Endothelial cell of umbilical vein (primary cell): ENCODE measurements at regions of chr5 and their contacts with region 1.

Region 1: DNA sequence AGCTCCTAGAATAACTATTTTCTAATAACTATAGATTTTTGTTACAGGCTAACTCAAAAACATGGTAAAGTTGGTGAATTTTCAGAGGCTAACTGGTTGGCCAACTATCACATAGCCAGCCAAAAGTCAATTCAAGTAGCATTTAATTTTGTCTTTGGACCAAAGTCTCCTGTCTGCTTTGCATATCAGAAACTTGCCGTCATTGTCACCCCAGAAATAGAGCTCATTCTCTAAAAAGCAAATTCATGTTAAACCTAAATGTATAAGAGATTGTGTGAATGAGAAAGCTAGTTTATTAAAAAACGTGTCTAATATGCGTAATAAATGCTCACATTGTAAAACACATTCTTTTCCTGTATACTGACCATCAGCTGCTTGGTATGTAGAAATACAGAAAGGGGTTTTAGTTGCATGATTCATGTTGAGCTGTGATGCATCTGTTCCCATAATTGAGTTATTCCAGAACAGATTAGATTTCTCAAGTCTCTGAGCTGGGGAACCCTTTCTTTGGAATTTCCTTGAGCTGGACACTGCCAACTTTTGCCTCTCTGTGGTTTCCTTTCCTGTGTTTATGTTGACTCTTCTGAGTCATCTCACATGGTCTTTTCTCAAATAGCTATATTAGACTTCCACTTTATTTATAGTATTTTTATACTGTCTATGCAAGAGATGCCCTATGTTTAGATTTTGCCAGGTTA is 7.3 kb downstream of the SRFBP1 start:
- DNase-seq: peak; percentile 97
- H3K4me3 ChIP-seq: peak overlapping the region in 1 of 3 experiments; percentile 59
- H3K27ac ChIP-seq: peak overlapping the region; percentile 96
- H3K4me1 ChIP-seq: peaks cover 32% of the 10 kb centered on the region
- H3K27me3 ChIP-seq: no peaks in the 10 kb centered on the region
- CTCF ChIP-seq: no peak
- POLR2A ChIP-seq: peak; percentile 55

Region 2: DNA sequence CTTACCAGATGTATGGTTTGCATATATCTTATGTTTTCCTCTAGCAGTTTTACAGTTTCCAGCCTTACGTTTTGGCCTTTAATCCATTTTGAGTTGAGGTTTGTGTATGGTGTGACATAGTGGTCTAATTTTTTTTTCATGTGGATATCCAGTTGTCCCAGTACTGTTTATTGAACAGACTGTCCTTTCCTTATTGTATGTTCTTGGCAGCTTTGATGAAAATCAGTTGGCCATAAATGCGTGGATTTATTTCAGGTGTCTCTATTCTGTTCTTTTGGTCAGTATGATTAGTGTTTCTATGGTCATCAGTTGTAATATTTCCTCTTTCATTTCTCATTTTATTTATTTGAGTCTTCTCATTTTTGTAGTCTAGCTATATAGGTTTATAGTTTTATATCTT is 35.1 kb after region 1 on chr5:
- CTCF ChIA-PET with region 1: no interaction called
- POLR2A ChIA-PET with region 1: no interaction called
- dilution Hi-C with region 1: no loop called
- intact Hi-C with region 1: no loop called
- DNase-seq: no peak
- H3K4me3 ChIP-seq: no peak overlapping the region
- H3K27ac ChIP-seq: no peak overlapping the region
- H3K4me1 ChIP-seq: no peaks in the 10 kb centered on the region
- H3K27me3 ChIP-seq: no peaks in the 10 kb centered on the region
- CTCF ChIP-seq: no peak
- POLR2A ChIP-seq: no peak

Region 3: GRCh38 chr5:122101636-122102285 is 132.7 kb after region 1 on chr5:
- CTCF ChIA-PET with region 1: interaction called, 77 read pairs
- POLR2A ChIA-PET with region 1: no interaction called
- dilution Hi-C with region 1: no loop called
- intact Hi-C with region 1: loop called (anchors 1 kb)
- DNase-seq: peak; percentile 64
- H3K4me3 ChIP-seq: no peak overlapping the region
- H3K27ac ChIP-seq: no peak overlapping the region
- H3K4me1 ChIP-seq: peaks cover 8% of the 10 kb centered on the region
- H3K27me3 ChIP-seq: no peaks in the 10 kb centered on the region
- CTCF ChIP-seq: peak; percentile 26 to 49
- POLR2A ChIP-seq: no peak

Region 4: GRCh38 chr5:122156724-122157325 is 187.8 kb after region 1 on chr5:
- CTCF ChIA-PET with region 1: interaction called, 39 read pairs
- POLR2A ChIA-PET with region 1: no interaction called
- dilution Hi-C with region 1: no loop called
- intact Hi-C with region 1: loop called (anchors 1 kb)
- DNase-seq: peak; percentile 42
- H3K4me3 ChIP-seq: no peak overlapping the region
- H3K27ac ChIP-seq: no peak overlapping the region
- H3K4me1 ChIP-seq: peaks cover 8% of the 10 kb centered on the region
- H3K27me3 ChIP-seq: no peaks in the 10 kb centered on the region
- CTCF ChIP-seq: peak in 1 of 2 donors; percentile 19
- POLR2A ChIP-seq: no peak

Region 5: DNA sequence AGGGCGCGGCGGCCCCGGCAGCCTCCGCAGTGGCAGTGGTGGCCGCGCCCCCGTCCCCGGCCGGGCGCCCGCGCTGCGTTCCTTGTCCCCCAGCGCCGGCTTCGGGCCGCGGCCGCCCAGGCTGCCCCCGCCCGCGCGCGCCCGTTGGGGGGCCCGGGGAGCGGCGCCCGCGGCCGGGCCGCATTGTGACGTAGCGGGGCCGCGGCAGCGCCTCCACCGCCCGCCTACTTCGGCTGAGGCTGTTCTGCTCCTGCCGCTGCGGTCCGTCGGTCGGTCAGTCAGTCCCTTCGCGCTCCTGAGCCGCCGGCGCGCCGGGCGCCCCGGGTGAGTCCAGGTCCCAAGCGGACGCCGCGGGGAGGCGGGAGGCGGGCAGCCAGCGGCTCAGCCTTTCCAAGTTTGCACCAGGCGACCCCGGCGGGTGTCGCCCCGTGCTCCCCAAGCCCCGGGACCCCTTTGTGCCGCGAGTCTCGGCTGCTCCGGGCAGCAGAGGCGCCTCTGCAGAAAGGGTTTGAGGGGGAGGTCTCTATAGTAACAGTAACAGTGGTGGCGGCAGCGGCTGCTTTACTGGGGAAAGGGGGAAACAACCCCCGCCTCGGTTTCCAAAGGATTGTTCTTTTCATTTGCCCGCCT is 343.0 kb after region 1 on chr5 and contains the start of gene SNCAIP:
- CTCF ChIA-PET with region 1: no interaction called
- POLR2A ChIA-PET with region 1: no interaction called
- dilution Hi-C with region 1: no loop called
- intact Hi-C with region 1: loop called (anchors 5 kb)
- DNase-seq: peak; percentile 58
- H3K4me3 ChIP-seq: peak within 1 kb of the TSS; percentile 59 to 89 (median 81)
- H3K27ac ChIP-seq: peak within 1 kb of the TSS; percentile 62
- H3K4me1 ChIP-seq: peaks cover 25% of the 10 kb centered on the region
- H3K27me3 ChIP-seq: no peaks in the 10 kb centered on the region
- CTCF ChIP-seq: no peak
- POLR2A ChIP-seq: no peak
- total RNA-seq, gene SNCAIP: 35.9 and 42.0 TPM in 2 replicates

Region 6: GRCh38 chr5:122454541-122454940 is 485.5 kb after region 1 on chr5:
- CTCF ChIA-PET with region 1: no interaction called
- POLR2A ChIA-PET with region 1: no interaction called
- dilution Hi-C with region 1: no loop called
- intact Hi-C with region 1: no loop called
- DNase-seq: no peak
- H3K4me3 ChIP-seq: no peak overlapping the region
- H3K27ac ChIP-seq: no peak overlapping the region
- H3K4me1 ChIP-seq: no peaks in the 10 kb centered on the region
- H3K27me3 ChIP-seq: no peaks in the 10 kb centered on the region
- CTCF ChIP-seq: no peak
- POLR2A ChIP-seq: no peak

Region 7: GRCh38 chr5:122500245-122501075 is 531.4 kb after region 1 on chr5:
- CTCF ChIA-PET with region 1: no interaction called
- POLR2A ChIA-PET with region 1: no interaction called
- dilution Hi-C with region 1: no loop called
- intact Hi-C with region 1: loop called (anchors 10 kb)
- DNase-seq: peak; percentile 49
- H3K4me3 ChIP-seq: no peak overlapping the region
- H3K27ac ChIP-seq: no peak overlapping the region
- H3K4me1 ChIP-seq: no peaks in the 10 kb centered on the region
- H3K27me3 ChIP-seq: peaks cover 3 to 6% of the 10 kb centered on the region in 2 experiments
- CTCF ChIP-seq: peak; percentile 37 to 55
- POLR2A ChIP-seq: no peak